ENCODE measurements at regions of chr4 and their contacts with region 1.

Region 1: GRCh38 chr4:163544407-163545038 is 50.0 kb downstream of the TMA16 start:
- DNase-seq: peak; percentile 43
- H3K4me3 ChIP-seq: peak overlapping the region; percentile 45
- H3K27ac ChIP-seq: no peak overlapping the region
- H3K4me1 ChIP-seq: peaks cover 5% of the 10 kb centered on the region
- H3K27me3 ChIP-seq: no peaks in the 10 kb centered on the region
- CTCF ChIP-seq: peak; percentile 97

Region 2: GRCh38 chr4:162497564-162498167 is 1046.9 kb before region 1 on chr4:
- intact Hi-C with region 1: loop called (anchors 10 kb)
- DNase-seq: no peak
- H3K4me3 ChIP-seq: peak overlapping the region; percentile 46
- H3K27ac ChIP-seq: peak overlapping the region; percentile 53
- H3K4me1 ChIP-seq: no peaks in the 10 kb centered on the region
- H3K27me3 ChIP-seq: no peaks in the 10 kb centered on the region
- CTCF ChIP-seq: peak; percentile 89

Region 3: DNA sequence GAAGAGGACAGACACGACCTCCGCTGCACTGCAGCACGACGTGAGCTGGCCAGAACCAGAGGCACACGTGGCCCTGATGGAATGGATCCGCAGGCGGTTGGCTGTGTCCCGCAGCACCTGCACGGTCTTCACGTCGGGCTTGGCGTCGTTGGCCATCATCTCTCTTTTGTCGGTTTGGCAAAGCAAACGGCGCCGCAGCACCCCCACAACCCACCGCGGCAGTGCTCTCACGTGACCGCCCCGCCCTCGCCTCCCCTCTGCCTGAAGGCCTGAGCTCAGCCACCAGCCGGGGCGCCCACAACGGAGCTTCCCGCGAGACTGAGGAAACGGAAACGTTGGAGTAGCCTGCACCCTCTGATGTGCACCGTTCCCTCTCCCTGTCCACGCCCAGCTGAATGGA is 70.9 kb before region 1 on chr4 and contains the start of gene TKTL2:
- intact Hi-C with region 1: no loop called
- DNase-seq: no peak
- H3K4me3 ChIP-seq: no peak within 1 kb of the TSS
- H3K27ac ChIP-seq: no peak within 1 kb of the TSS
- H3K4me1 ChIP-seq: no peaks in the 10 kb centered on the region
- H3K27me3 ChIP-seq: no peaks in the 10 kb centered on the region
- CTCF ChIP-seq: no peak
- total RNA-seq, gene TKTL2: not detected

Region 4: GRCh38 chr4:163484906-163485305 is 59.6 kb before region 1 on chr4:
- intact Hi-C with region 1: loop called (anchors 2 kb)
- DNase-seq: no peak
- H3K4me3 ChIP-seq: no peak overlapping the region
- H3K27ac ChIP-seq: no peak overlapping the region
- H3K4me1 ChIP-seq: no peaks in the 10 kb centered on the region
- H3K27me3 ChIP-seq: no peaks in the 10 kb centered on the region
- CTCF ChIP-seq: peak; percentile 63

Measured in left ventricle myocardium inferior (tissue), 1 donor.